PC-3 (cell line): ENCODE measurements at regions of chr1 and their contacts with region 1.

Region 1: DNA sequence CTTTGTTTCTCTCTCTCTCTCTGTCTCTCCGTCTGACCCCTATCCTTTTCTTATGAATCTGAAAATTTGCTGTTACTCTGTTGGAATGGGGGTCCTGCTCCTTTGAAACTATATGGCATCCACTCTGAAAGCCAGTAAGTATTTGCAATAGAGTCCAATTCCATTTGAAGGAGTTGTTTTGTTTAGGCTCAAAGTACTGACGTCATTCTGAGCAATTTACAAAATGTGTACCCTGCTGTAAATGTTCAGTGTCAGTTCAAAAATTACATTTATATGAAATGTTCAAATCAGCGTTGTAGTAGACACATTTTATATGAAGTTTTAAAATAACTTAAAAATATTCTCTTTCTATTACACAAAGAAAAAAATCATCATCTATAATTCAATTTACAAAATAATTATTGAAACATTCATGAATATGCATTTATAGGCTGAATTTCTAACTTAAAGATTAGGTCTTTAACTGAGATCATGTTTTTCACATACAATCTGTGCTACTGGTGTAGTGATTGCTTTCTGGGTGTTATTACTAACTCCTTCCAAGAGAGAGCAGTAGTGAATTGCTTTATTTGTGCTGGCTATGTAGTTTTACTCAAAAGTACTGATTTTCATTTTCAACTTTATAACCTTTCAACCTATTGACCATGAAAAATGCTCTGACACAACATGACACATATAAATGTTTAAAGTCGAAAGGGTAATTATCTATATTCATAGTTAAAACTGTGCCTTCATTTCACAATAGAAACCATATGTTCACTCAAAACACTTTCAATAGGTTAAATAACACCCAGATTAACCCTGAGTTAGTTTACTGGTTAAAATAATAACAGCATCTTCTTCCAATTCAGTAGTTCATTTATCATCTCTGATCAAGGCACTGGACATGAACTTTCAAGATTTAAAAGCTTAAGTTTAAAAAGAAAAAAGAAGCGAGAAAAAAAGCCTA is 253.1 kb upstream of the ADGRL4 start:
- DNase-seq: peak; percentile 56
- ATAC-seq: peak; percentile 51; the same call in 1 of the 2 replicates
- H3K4me3 ChIP-seq: no peak overlapping the region
- H3K27ac ChIP-seq: no peak overlapping the region
- H3K4me1 ChIP-seq: peaks cover 15% of the 10 kb centered on the region
- H3K27me3 ChIP-seq: no peaks in the 10 kb centered on the region
- CTCF ChIP-seq: peak; percentile 82

Region 2: DNA sequence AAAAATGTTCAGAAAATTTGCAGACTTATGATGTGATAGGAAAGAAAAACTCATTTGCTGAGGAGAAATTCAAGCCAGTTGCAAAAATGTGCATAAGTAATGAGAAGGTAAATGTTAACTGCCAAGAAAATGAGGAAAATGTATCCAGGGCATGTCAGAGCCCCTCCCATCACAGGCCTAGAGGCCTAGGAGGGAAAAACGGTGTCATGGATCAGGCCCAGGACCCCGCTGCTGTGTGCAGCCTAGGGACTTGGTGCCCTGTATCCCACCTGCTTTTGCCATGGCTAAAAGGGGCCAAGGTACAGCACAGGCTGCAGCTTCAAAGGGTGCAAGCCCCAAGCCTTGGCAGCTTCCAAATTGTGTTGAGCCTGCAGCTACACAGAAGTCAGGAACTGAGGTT is 39.2 kb before region 1 on chr1:
- CTCF ChIA-PET with region 1: no interaction called
- POLR2A ChIA-PET with region 1: no interaction called
- intact Hi-C with region 1: no loop called
- DNase-seq: no peak
- ATAC-seq: no peak
- H3K4me3 ChIP-seq: no peak overlapping the region
- H3K27ac ChIP-seq: no peak overlapping the region
- H3K4me1 ChIP-seq: peaks cover 3% of the 10 kb centered on the region
- H3K27me3 ChIP-seq: no peaks in the 10 kb centered on the region
- CTCF ChIP-seq: no peak

Region 3: GRCh38 chr1:79353224-79353623 is 93.6 kb after region 1 on chr1:
- CTCF ChIA-PET with region 1: interaction called, 5 read pairs
- POLR2A ChIA-PET with region 1: no interaction called
- intact Hi-C with region 1: loop called (anchors 1 kb)
- DNase-seq: peak; percentile 83
- ATAC-seq: peak; percentile 77
- H3K4me3 ChIP-seq: no peak overlapping the region
- H3K27ac ChIP-seq: no peak overlapping the region
- H3K4me1 ChIP-seq: no peaks in the 10 kb centered on the region
- H3K27me3 ChIP-seq: no peaks in the 10 kb centered on the region
- CTCF ChIP-seq: peak; percentile 81

Region 4: DNA sequence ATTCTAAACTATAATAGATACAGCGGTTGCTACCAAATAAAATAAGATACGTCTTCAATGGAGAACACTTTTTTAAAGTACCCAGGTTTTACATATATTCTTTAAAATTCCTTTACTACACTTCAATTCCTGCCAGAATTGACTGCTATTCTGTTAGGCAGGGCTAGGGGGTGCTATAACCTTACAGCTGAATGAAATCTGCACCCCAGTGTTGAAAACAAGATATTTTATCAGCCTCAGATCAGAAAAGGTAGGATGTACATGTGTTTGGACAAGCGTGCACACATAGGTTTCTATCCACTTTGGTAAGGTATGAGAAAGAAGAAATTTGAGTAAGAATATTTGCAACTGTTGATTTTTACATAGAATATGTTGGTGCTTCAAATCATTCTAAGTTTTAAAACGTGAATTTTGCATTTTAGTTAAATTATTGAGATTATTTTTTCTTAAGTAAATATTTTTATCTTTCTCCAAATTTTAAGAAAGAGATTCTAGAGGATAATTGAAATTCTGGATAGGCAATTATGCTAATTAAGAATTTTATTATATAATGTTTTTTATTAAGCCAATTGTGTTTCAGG is 237.6 kb after region 1 on chr1:
- CTCF ChIA-PET with region 1: no interaction called
- POLR2A ChIA-PET with region 1: no interaction called
- intact Hi-C with region 1: loop called (anchors 2 kb)
- DNase-seq: peak; percentile 66
- ATAC-seq: peak; percentile 57
- H3K4me3 ChIP-seq: no peak overlapping the region
- H3K27ac ChIP-seq: no peak overlapping the region
- H3K4me1 ChIP-seq: no peaks in the 10 kb centered on the region
- H3K27me3 ChIP-seq: no peaks in the 10 kb centered on the region
- CTCF ChIP-seq: peak; percentile 96